B cell (primary cell): ENCODE measurements at regions of chr19 and their contacts with region 1.

Region 1: GRCh38 chr19:10780368-10780767 is 55.6 kb downstream of the TMED1 start:
- DNase-seq: no peak
- ATAC-seq: no peak
- H3K4me3 ChIP-seq: no peak overlapping the region
- H3K4me3 Mint-ChIP-seq: no peak overlapping the region
- H3K27ac ChIP-seq: peak overlapping the region in 1 of 2 donors; percentile 60
- H3K27ac Mint-ChIP-seq: peak overlapping the region; percentile 86
- H3K4me1 ChIP-seq: peaks cover 42 to 67% of the 10 kb centered on the region in 2 donors
- H3K4me1 Mint-ChIP-seq: peaks cover 54% of the 10 kb centered on the region
- H3K27me3 ChIP-seq: no peaks in the 10 kb centered on the region
- H3K27me3 Mint-ChIP-seq: no peaks in the 10 kb centered on the region
- CTCF ChIP-seq: no peak

Region 2: DNA sequence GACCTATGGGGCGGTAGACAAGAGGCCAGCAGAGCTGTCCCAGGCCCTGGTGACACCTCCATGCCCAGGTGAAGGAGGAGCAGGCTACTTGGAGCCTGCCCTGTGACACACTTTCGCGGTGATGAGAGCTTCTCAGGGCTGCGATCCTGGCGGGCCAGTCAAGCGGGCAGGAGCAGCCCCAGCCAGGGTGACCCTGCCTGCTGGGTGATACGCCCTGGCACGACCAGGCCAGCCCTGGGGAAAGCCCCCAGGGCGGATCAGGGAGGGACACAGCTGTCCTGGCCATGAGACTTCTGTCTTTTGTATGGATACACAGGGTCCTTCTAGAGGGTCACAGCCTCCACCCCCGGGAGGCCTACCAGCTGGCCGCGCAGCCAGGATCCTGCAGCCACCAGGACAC is 49.4 kb before region 1 on chr19:
- CTCF ChIA-PET with region 1: interaction called, 4 read pairs
- POLR2A ChIA-PET with region 1: no interaction called
- intact Hi-C with region 1: loop called (anchors 1 kb)
- DNase-seq: peak; percentile 48
- ATAC-seq: peak; percentile 23
- H3K4me3 ChIP-seq: no peak overlapping the region
- H3K4me3 Mint-ChIP-seq: peak overlapping the region; percentile 84
- H3K27ac ChIP-seq: peak overlapping the region; percentile 63 to 82
- H3K27ac Mint-ChIP-seq: peak overlapping the region; percentile 85
- H3K4me1 ChIP-seq: peaks cover 39 to 60% of the 10 kb centered on the region in 2 donors
- H3K4me1 Mint-ChIP-seq: peaks cover 52% of the 10 kb centered on the region
- H3K27me3 ChIP-seq: no peaks in the 10 kb centered on the region
- H3K27me3 Mint-ChIP-seq: no peaks in the 10 kb centered on the region
- CTCF ChIP-seq: no peak

Region 3: DNA sequence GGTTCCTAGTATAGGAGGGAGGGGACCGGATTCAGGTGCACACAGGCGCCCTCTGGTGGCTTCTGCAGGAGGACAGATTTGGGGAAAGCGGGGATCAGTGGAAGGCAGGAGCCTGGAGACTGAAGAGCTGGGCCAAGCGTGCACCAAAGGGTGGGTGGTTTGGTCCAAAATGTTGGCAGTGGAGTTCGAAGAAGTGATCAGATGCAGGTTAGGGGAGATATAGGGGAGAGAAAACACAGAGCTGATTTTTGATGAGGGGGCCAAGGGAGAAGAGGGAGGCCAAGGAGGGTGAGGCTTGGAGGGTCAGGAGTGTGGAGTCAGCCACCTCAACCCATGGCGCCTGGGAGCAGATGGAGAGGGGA is 84.2 kb after region 1 on chr19:
- CTCF ChIA-PET with region 1: interaction called, 11 read pairs
- POLR2A ChIA-PET with region 1: interaction called, 4 read pairs
- intact Hi-C with region 1: no loop called
- DNase-seq: peak; percentile 81
- ATAC-seq: peak; percentile 69
- H3K4me3 ChIP-seq: no peak overlapping the region
- H3K4me3 Mint-ChIP-seq: no peak overlapping the region
- H3K27ac ChIP-seq: no peak overlapping the region
- H3K27ac Mint-ChIP-seq: peak overlapping the region; percentile 38
- H3K4me1 ChIP-seq: peaks cover 21 to 31% of the 10 kb centered on the region in 2 donors
- H3K4me1 Mint-ChIP-seq: peaks cover 34% of the 10 kb centered on the region
- H3K27me3 ChIP-seq: no peaks in the 10 kb centered on the region
- H3K27me3 Mint-ChIP-seq: no peaks in the 10 kb centered on the region
- CTCF ChIP-seq: peak; percentile 83